ENCODE measurements at regions of chr18 and their contacts with region 1.

Region 1: DNA sequence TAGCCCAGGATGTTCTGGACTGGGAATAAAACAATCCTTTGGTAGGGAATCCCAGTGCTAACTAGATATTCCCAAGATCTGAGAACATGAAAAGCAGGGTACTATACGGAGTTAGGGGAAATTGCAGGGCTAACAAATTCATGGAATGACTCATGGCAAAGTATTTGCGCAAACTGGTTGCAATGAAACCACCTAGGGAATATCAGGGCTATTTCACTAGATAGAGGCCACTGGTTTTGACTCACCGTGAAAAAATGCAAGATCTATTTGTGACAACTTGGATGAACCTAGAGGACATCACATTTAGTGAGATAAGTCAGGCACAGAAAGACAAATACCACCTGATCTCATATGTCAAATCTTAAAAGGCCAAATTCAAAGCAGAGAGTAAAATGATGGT is 233.3 kb downstream of the MBD2 start:
- DNase-seq: no peak

Region 2: DNA sequence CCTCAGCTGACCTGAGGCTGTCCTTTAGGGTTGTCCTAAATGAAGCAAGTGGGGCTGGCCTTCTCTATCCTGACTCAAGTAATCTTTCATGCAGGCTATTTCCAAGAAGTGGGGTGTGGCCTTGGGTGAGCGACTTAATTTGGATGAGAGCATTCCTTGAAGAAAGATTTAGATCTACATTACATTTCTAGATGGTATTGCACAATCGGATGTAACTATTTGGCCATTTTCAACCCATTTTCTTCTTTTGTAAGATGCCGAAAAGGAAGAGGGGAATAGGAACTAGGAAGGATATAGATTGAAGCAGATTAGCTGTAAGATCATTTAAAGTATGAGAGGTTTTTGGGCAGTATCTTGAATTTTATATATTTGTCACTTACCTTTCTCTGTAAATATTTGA is 513.0 kb before region 1 on chr18:
- intact Hi-C with region 1: no loop called
- DNase-seq: no peak

Region 3: DNA sequence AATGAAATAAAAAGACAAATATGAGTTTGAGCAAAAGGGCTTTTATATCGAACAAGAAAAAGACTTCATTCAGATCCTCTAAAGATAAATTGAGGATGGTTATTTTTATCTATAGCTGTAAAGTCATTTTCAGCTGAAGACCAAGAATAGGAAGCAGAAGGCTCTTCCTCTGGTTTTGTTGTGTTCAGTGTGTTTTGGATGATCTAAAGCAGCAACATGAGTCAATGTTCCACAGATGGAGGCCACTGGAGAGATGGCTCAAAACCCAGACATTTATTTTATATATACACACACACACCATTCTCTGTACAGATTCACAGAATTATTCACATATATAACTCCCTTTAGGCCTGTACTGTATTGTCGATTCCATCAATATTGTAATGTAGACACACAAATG is 191.0 kb before region 1 on chr18:
- intact Hi-C with region 1: no loop called
- DNase-seq: no peak

Region 4: GRCh38 chr18:53971331-53971730 is 19.9 kb before region 1 on chr18:
- intact Hi-C with region 1: loop called in 1 of 2 experiments (anchors 1 kb)
- DNase-seq: no peak